ENCODE measurements at regions of chr10 and their contacts with region 1.

Region 1: DNA sequence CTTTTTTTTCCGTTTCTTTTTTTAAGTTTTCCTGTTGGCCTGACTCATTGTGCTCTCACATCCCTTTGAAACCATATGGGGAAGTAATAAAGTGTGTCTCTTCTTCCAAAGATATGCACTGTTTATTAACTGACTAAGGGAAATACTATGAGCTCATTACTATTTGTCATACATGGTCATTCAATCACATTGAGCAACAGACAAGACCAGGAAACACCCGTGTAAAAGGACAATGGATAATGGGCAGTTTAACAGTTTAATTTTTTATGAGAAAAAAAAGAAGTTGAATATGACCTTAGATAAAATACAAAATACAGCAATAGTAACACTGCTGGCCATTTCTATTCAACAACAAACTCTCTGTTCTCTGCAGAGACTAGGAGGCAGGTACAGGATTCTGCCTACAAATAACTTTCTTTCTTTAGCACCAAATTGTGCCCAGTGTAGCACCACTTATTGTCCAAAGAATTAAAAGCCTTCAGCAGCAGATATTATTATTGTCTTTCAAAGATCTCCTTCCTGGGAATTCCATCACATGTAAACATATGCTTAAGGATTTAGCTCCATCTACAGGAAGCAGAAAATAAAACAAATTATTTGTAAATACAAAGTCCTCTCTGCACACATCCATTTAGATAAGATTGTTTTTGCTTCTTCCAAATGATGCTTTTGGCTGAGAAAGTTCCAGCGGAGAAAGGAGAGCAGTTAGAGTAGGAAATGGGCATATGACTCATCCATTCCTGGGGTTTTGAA is 55.0 kb upstream of the AKR1E2 start:
- DNase-seq: no peak
- H3K4me3 ChIP-seq: no peak overlapping the region
- H3K27ac ChIP-seq: peak overlapping the region; percentile 47 to 51
- H3K4me1 ChIP-seq: no peaks in the 10 kb centered on the region
- H3K27me3 ChIP-seq: no peaks in the 10 kb centered on the region
- CTCF ChIP-seq: peak; percentile 41 to 51 (median 46)
- POLR2A ChIP-seq: no peak

Region 2: GRCh38 chr10:3197348-3198003 is 1573.5 kb before region 1 on chr10:
- intact Hi-C with region 1: loop called (anchors 10 kb)
- DNase-seq: peak; percentile 84 to 85
- H3K4me3 ChIP-seq: peak overlapping the region in 1 of 2 donors; percentile 14
- H3K27ac ChIP-seq: peak overlapping the region in 1 of 2 donors; percentile 31
- H3K4me1 ChIP-seq: peaks cover 0 to 5% of the 10 kb centered on the region in 2 donors
- H3K27me3 ChIP-seq: no peaks in the 10 kb centered on the region
- CTCF ChIP-seq: peak; percentile 90 to 93 (median 93)
- POLR2A ChIP-seq: no peak